ENCODE measurements at regions of chr2 and their contacts with region 1.

Region 1: GRCh38 chr2:24827321-24828237 is 34.4 kb downstream of the CENPO start:
- DNase-seq: peak; percentile 73
- ATAC-seq: peak; percentile 89 to 93
- H3K4me3 ChIP-seq: no peak overlapping the region
- H3K27ac ChIP-seq: no peak overlapping the region
- H3K4me1 ChIP-seq: peaks cover 11% of the 10 kb centered on the region
- H3K27me3 ChIP-seq: no peaks in the 10 kb centered on the region
- CTCF ChIP-seq: peak; percentile 92

Region 2: GRCh38 chr2:24409700-24410556 is 417.7 kb before region 1 on chr2:
- intact Hi-C with region 1: loop called (anchors 5 kb)
- DNase-seq: no peak
- ATAC-seq: peak; percentile 82 to 86
- H3K4me3 ChIP-seq: no peak overlapping the region
- H3K27ac ChIP-seq: no peak overlapping the region
- H3K4me1 ChIP-seq: no peaks in the 10 kb centered on the region
- H3K27me3 ChIP-seq: no peaks in the 10 kb centered on the region
- CTCF ChIP-seq: peak; percentile 82

Region 3: GRCh38 chr2:24551016-24551415 is 276.6 kb before region 1 on chr2:
- intact Hi-C with region 1: no loop called
- DNase-seq: no peak
- ATAC-seq: no peak
- H3K4me3 ChIP-seq: no peak overlapping the region
- H3K27ac ChIP-seq: no peak overlapping the region
- H3K4me1 ChIP-seq: no peaks in the 10 kb centered on the region
- H3K27me3 ChIP-seq: no peaks in the 10 kb centered on the region
- CTCF ChIP-seq: no peak

Region 4: DNA sequence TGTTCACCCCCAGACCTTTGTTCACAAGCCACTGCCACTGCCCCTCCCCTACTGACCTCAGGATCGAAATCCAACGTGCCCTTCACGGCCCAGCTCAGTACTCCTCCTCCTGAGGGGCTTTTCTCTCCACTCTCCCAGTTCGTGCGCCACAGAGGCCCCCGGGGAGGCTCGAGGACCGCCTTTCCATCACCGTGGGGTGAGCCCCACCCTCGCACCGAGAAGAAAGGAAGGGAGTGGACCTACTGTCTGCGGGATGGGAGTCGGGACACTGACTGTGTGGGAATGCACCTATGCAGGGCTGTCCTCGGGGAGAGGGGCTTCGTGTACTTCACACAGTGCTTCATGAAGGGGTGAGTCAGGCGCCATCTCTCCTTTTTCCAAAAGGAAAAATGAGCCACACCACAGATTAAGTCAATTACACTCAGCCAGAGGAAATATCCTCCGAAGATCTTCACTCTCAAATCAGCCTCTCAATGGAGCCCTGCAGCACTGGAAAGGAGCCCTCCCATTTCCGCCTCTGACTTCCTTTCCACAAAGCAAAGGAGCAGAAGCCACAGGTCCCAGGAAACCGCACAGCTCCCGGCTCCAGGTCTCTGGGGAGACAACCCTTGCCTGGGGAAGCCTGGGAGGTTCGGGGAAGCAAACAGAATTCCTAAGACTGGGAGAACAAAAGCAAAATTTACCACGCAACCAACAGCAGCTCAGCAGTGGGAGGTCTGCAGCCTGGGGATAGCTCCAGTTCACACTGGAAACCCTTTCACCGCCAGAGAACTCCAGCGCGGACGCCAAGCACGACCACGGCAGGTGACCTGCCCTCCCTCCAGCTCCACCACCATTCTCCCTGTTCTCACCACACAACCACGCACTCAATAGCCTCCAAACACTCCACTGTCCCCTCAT is 70.8 kb after region 1 on chr2:
- intact Hi-C with region 1: no loop called
- DNase-seq: no peak
- ATAC-seq: no peak
- H3K4me3 ChIP-seq: no peak overlapping the region
- H3K27ac ChIP-seq: no peak overlapping the region
- H3K4me1 ChIP-seq: no peaks in the 10 kb centered on the region
- H3K27me3 ChIP-seq: no peaks in the 10 kb centered on the region
- CTCF ChIP-seq: no peak